ENCODE measurements at regions of chr14 and their contacts with region 1.

Region 1: DNA sequence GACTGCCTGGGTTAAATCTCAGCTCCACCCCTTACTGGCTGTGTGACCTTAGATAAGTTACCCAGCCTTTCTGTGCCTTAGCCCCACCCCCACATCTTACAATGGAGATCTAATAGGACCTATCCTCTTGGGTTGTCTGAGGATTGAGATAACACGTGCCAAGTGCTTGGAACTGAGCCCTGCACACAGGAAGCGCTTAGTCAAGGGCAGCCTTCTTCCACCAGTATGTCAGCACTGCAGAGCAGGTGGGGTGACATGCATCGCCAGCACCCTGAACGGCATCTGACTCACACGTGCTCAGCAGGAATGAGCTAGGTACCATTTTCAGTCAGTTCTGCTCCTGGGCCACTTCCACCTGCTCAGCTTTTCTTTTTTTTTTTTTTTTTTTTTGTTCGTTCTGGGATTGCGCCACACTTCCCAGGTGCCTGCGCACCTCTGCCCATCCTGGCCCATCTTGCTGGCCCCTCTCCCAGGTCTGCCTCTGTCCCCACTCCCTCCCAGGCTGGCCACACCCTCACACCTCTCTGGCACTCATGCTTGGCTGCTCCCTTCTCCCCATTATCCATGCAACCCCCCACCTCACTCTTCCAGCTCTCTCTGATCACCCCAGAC is 19.6 kb downstream of the LGMN start:
- DNase-seq: peak; percentile 79
- H3K4me3 Mint-ChIP-seq: no peak overlapping the region
- H3K27ac Mint-ChIP-seq: no peak overlapping the region
- H3K4me1 Mint-ChIP-seq: peaks cover 14% of the 10 kb centered on the region
- H3K27me3 Mint-ChIP-seq: no peaks in the 10 kb centered on the region

Region 2: GRCh38 chr14:92748259-92749016 is 19.6 kb after region 1 on chr14 and contains the start of gene LGMN:
- CTCF ChIA-PET with region 1: interaction called, 4 read pairs
- intact Hi-C with region 1: loop called (anchors 2 kb)
- DNase-seq: peak; percentile 90
- H3K4me3 Mint-ChIP-seq: peak within 1 kb of the TSS; percentile 81
- H3K27ac Mint-ChIP-seq: no peak within 1 kb of the TSS
- H3K4me1 Mint-ChIP-seq: peaks cover 35% of the 10 kb centered on the region
- H3K27me3 Mint-ChIP-seq: peaks cover 4% of the 10 kb centered on the region
- total RNA-seq, gene LGMN: 6.9 to 7.7 TPM

Region 3: GRCh38 chr14:92770484-92770883 is 41.6 kb after region 1 on chr14:
- CTCF ChIA-PET with region 1: no interaction called
- intact Hi-C with region 1: loop called (anchors 1 kb)
- DNase-seq: no peak
- H3K4me3 Mint-ChIP-seq: no peak overlapping the region
- H3K27ac Mint-ChIP-seq: no peak overlapping the region
- H3K4me1 Mint-ChIP-seq: peaks cover 22% of the 10 kb centered on the region
- H3K27me3 Mint-ChIP-seq: no peaks in the 10 kb centered on the region